ENCODE measurements at regions of chr11 and their contacts with region 1.

Region 1: GRCh38 chr11:94973099-94973968 is at the starts of genes CWC15 and KDM4D:
- DNase-seq: peak; percentile 89 to 97 (median 92)
- ATAC-seq: peak; percentile 99
- H3K4me3 ChIP-seq: peak within 1 kb of the TSS; percentile 89
- H3K4me3 Mint-ChIP-seq: peak within 1 kb of the TSS; percentile 99
- H3K27ac ChIP-seq: peak within 1 kb of the TSS; percentile 68 to 77
- H3K27ac Mint-ChIP-seq: peak within 1 kb of the TSS; percentile 92
- H3K4me1 ChIP-seq: no peaks in the 10 kb centered on the region
- H3K4me1 Mint-ChIP-seq: peaks cover 42% of the 10 kb centered on the region
- H3K27me3 ChIP-seq: no peaks in the 10 kb centered on the region
- H3K27me3 Mint-ChIP-seq: no peaks in the 10 kb centered on the region
- CTCF ChIP-seq: no peak
- total RNA-seq, gene CWC15: 121 to 124 TPM
- total RNA-seq, gene KDM4D: 0.16 to 0.22 TPM

Region 2: DNA sequence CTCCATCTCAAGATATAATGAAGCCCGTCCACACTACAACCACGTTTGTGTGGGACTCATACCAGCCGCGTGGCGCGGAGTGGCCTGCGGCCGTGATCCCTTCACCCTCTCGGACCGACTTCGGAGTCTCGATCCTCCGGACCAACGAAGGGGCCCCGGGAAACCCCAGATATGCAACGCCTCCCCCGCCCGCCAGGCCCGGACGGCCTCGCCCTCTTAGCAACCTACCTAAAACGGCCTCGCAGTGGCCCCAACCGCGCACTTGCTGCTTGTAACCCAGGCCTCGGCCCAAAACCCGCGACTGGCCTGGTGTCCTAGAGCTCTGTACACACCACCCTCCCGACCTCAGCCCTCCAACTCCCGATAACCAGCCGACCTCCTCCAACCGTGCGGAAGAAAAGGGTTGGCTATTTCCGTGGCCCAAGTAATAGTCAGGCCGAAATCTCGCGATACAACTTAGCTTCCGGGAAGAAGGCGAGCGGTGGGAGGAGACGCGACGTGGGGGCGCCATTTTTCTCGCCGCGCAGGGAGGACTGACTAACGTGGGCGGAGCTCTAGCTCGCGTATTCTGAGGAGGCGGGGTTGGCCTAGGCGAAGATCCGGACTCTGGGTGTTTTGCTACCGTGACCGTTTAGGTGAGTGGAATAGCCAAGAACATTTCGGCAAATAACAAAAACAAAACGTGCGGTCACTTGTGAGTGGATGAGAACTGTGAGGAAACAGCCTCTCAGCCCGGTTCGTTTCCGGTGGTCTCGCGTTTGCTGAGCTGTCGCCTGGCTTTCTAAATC is 1232.0 kb before region 1 on chr11 and contains the starts of genes C11orf54 and TAF1D:
- CTCF ChIA-PET with region 1: no interaction called
- POLR2A ChIA-PET with region 1: interaction called, 6 read pairs
- intact Hi-C with region 1: loop called in 1 of 2 experiments (anchors 5 kb)
- DNase-seq: peak; percentile 92 to 99 (median 96)
- ATAC-seq: peak; percentile 90
- H3K4me3 ChIP-seq: peak within 1 kb of the TSS; percentile 88
- H3K4me3 Mint-ChIP-seq: peak within 1 kb of the TSS; percentile 98
- H3K27ac ChIP-seq: peak within 1 kb of the TSS; percentile 95 to 97
- H3K27ac Mint-ChIP-seq: peak within 1 kb of the TSS; percentile 98
- H3K4me1 ChIP-seq: peaks cover 22% of the 10 kb centered on the region
- H3K4me1 Mint-ChIP-seq: peaks cover 76% of the 10 kb centered on the region
- H3K27me3 ChIP-seq: no peaks in the 10 kb centered on the region
- H3K27me3 Mint-ChIP-seq: no peaks in the 10 kb centered on the region
- CTCF ChIP-seq: no peak
- total RNA-seq, gene C11orf54: 6.8 to 8.0 TPM
- total RNA-seq, gene TAF1D: 161 to 173 TPM

Region 3: DNA sequence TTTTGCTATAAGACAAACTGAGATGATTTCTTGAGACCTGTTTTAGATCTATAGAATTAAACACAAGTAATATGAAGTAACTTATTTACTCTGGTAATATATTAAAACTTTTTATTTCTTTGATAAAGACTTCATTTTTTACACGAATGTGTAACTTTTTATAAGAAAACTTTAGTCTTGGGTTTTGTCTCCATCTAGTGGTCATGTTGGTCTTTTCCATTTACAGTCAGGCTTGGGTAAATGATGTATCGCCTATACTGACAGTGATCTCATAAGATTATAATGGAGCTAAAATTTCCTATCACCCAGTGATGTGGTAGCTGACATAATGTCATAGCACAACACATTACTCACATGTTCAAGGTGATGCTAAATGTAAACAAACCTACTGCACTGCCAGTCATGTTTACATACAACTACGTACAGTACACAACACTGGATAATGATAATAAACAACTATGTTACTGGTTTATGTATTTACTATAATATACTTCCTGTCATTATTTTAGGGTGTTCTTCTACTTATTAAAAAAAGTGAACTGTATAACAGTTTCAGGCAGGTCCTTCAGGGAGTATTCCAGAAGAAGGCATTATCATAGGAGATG is 468.5 kb before region 1 on chr11:
- CTCF ChIA-PET with region 1: interaction called, 3 read pairs
- POLR2A ChIA-PET with region 1: no interaction called
- intact Hi-C with region 1: loop called in 1 of 2 experiments (anchors 5 kb)
- DNase-seq: peak in 3 of 14 experiments; percentile 58 to 75 (median 72)
- ATAC-seq: peak; percentile 43
- H3K4me3 ChIP-seq: no peak overlapping the region
- H3K4me3 Mint-ChIP-seq: no peak overlapping the region
- H3K27ac ChIP-seq: no peak overlapping the region
- H3K27ac Mint-ChIP-seq: no peak overlapping the region
- H3K4me1 ChIP-seq: no peaks in the 10 kb centered on the region
- H3K4me1 Mint-ChIP-seq: no peaks in the 10 kb centered on the region
- H3K27me3 ChIP-seq: no peaks in the 10 kb centered on the region
- H3K27me3 Mint-ChIP-seq: peaks cover 11% of the 10 kb centered on the region
- CTCF ChIP-seq: peak; percentile 85

Region 4: GRCh38 chr11:94933223-94934130 is 39.9 kb before region 1 on chr11:
- CTCF ChIA-PET with region 1: no interaction called
- POLR2A ChIA-PET with region 1: interaction called, 19 read pairs
- intact Hi-C with region 1: no loop called
- DNase-seq: no peak
- ATAC-seq: no peak
- H3K4me3 ChIP-seq: no peak overlapping the region
- H3K4me3 Mint-ChIP-seq: peak overlapping the region; percentile 80
- H3K27ac ChIP-seq: no peak overlapping the region
- H3K27ac Mint-ChIP-seq: peak overlapping the region; percentile 25
- H3K4me1 ChIP-seq: peaks cover 31% of the 10 kb centered on the region
- H3K4me1 Mint-ChIP-seq: peaks cover 65% of the 10 kb centered on the region
- H3K27me3 ChIP-seq: no peaks in the 10 kb centered on the region
- H3K27me3 Mint-ChIP-seq: no peaks in the 10 kb centered on the region
- CTCF ChIP-seq: no peak

Region 5: DNA sequence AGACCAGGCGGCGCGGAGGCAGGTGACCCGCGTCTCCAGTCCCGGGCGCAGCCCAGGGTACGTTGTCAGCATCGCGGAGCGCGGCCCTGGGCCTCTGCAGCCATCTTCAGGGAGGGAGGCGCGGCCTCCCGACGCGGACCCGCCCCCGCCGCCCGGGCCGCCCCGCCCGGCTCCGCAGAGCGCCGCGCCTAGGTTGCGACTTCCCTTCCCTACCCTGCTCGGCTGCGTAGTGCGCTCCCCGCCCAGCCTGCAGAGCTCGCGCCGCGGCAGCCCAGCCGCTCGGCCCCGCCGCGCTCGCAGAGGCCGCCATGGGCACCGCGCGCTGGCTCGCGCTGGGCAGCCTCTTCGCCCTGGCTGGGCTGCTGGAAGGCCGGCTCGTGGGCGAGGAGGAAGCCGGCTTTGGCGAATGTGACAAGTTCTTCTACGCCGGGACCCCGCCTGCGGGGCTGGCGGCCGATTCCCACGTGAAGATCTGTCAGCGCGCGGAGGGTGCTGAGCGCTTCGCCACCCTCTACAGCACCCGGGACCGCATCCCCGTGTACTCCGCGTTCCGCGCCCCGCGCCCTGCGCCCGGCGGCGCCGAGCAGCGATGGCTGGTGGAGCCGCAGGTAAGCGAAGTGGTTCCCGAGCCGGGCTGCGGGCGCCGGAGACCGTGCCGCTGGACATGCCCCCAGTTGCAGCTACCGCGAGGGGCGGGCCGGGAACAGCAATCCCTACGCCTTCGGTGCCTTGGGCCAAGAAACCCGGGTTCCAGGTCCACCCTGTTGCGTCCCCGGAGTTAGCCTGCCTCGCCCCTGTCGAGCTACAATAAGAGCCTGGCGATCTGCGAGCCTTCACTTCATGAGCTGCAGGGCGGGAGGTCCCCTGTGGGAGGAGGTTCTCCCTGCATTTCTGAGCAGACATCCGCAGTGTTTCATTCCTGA is 116.5 kb after region 1 on chr11 and contains the start of gene ENDOD1:
- CTCF ChIA-PET with region 1: no interaction called
- POLR2A ChIA-PET with region 1: interaction called, 29 read pairs
- intact Hi-C with region 1: loop called in 1 of 2 experiments (anchors 5 kb)
- DNase-seq: peak; percentile 70 to 94 (median 84)
- ATAC-seq: peak; percentile 94
- H3K4me3 ChIP-seq: peak within 1 kb of the TSS; percentile 78
- H3K4me3 Mint-ChIP-seq: peak within 1 kb of the TSS; percentile 92
- H3K27ac ChIP-seq: peak within 1 kb of the TSS; percentile 77 to 84
- H3K27ac Mint-ChIP-seq: peak within 1 kb of the TSS; percentile 95
- H3K4me1 ChIP-seq: peaks cover 34% of the 10 kb centered on the region
- H3K4me1 Mint-ChIP-seq: peaks cover 50% of the 10 kb centered on the region
- H3K27me3 ChIP-seq: no peaks in the 10 kb centered on the region
- H3K27me3 Mint-ChIP-seq: no peaks in the 10 kb centered on the region
- CTCF ChIP-seq: no peak
- total RNA-seq, gene ENDOD1: 3.8 to 4.4 TPM

Region 6: DNA sequence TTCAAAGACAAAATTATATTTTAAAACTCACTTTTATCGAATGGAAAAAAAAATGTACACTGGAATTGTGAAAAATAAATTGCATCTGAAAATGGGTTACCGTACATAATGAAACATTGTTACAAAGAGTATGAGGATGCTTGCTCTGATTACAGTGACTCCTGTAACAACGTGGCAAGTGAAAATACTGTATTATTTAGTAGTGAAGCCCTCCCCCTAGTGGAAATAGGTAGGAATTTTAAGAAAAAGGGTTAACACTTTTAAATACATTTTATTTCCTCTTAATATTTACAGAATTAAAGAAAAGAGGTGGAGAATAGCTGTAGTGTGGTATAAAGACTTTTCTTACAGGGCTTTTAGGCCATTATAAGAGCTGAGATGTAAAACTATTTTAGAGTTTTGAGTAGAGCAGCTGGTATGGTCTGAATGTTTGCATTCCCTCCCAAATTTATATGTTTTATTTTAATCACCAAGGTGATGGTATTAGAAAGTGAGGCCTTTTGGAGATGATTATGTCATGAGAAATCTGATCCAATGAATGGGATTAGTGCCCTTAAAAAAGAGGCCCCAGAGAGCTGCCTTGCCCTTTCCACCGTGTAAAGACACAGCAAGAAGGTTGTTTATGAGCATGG is 791.0 kb after region 1 on chr11:
- CTCF ChIA-PET with region 1: no interaction called
- POLR2A ChIA-PET with region 1: no interaction called
- intact Hi-C with region 1: loop called in 1 of 2 experiments (anchors 10 kb)
- DNase-seq: peak in 3 of 14 experiments; percentile 73 to 76 (median 75)
- ATAC-seq: peak; percentile 91
- H3K4me3 ChIP-seq: no peak overlapping the region
- H3K4me3 Mint-ChIP-seq: no peak overlapping the region
- H3K27ac ChIP-seq: no peak overlapping the region
- H3K27ac Mint-ChIP-seq: no peak overlapping the region
- H3K4me1 ChIP-seq: no peaks in the 10 kb centered on the region
- H3K4me1 Mint-ChIP-seq: no peaks in the 10 kb centered on the region
- H3K27me3 ChIP-seq: no peaks in the 10 kb centered on the region
- H3K27me3 Mint-ChIP-seq: no peaks in the 10 kb centered on the region
- CTCF ChIP-seq: peak; percentile 80

Measured in CD4-positive, alpha-beta T cell (primary cell).